ENCODE measurements at regions of chr5 and their contacts with region 1.

Region 1: GRCh38 chr5:97183100-97183929 is at the start of gene RIOK2:
- DNase-seq: peak; percentile 95
- ATAC-seq: peak; percentile 90
- H3K4me3 ChIP-seq: peak within 1 kb of the TSS; percentile 84
- H3K27ac ChIP-seq: peak within 1 kb of the TSS; percentile 85
- H3K4me1 ChIP-seq: peaks cover 14% of the 10 kb centered on the region
- H3K27me3 ChIP-seq: no peaks in the 10 kb centered on the region
- CTCF ChIP-seq: no peak
- total RNA-seq, gene RIOK2: 16.1 and 22.3 TPM in 2 replicates

Region 2: GRCh38 chr5:97224112-97224750 is 40.9 kb after region 1 on chr5:
- CTCF ChIA-PET with region 1: no interaction called
- POLR2A ChIA-PET with region 1: no interaction called
- intact Hi-C with region 1: loop called (anchors 2 kb)
- DNase-seq: peak; percentile 63
- ATAC-seq: peak; percentile 86
- H3K4me3 ChIP-seq: no peak overlapping the region
- H3K27ac ChIP-seq: no peak overlapping the region
- H3K4me1 ChIP-seq: peaks cover 15% of the 10 kb centered on the region
- H3K27me3 ChIP-seq: no peaks in the 10 kb centered on the region
- CTCF ChIP-seq: no peak

Region 3: GRCh38 chr5:97600486-97600885 is 417.2 kb after region 1 on chr5:
- CTCF ChIA-PET with region 1: no interaction called
- POLR2A ChIA-PET with region 1: no interaction called
- intact Hi-C with region 1: no loop called
- DNase-seq: peak; percentile 11
- ATAC-seq: peak; percentile 43
- H3K4me3 ChIP-seq: no peak overlapping the region
- H3K27ac ChIP-seq: no peak overlapping the region
- H3K4me1 ChIP-seq: no peaks in the 10 kb centered on the region
- H3K27me3 ChIP-seq: no peaks in the 10 kb centered on the region
- CTCF ChIP-seq: no peak

Measured in PC-3 (cell line).